PC-9 (cell line): ENCODE measurements at regions of chr15 and their contacts with region 1.

Region 1: DNA sequence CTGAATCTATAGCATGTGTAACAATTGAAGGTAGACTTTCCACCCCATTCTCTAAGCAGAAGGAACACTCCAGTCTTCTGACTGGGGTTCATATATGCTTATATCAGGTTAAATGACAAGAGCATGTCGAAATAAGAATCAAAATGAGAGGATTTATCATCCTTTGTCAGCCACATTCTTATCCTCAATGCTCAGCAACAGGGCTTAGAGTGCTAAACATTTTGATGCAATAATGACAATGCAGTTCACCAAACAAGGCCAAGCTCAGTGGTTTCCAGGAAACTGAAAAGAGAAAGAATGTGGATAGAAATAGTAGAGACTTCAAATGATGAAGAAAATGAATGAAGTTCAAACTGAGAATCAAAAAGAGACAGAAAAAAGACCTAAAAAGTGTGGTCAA is 78.0 kb downstream of the FSIP1 start:
- DNase-seq: no peak
- H3K4me3 ChIP-seq: no peak overlapping the region
- H3K27ac ChIP-seq: no peak overlapping the region
- H3K4me1 ChIP-seq: no peaks in the 10 kb centered on the region
- H3K27me3 ChIP-seq: no peaks in the 10 kb centered on the region
- CTCF ChIP-seq: no peak

Region 2: GRCh38 chr15:39624806-39625205 is 79.9 kb before region 1 on chr15:
- CTCF ChIA-PET with region 1: no interaction called
- POLR2A ChIA-PET with region 1: no interaction called
- intact Hi-C with region 1: no loop called
- DNase-seq: peak; percentile 49 to 57
- H3K4me3 ChIP-seq: no peak overlapping the region
- H3K27ac ChIP-seq: peak overlapping the region; percentile 45
- H3K4me1 ChIP-seq: peaks cover 12% of the 10 kb centered on the region
- H3K27me3 ChIP-seq: no peaks in the 10 kb centered on the region
- CTCF ChIP-seq: no peak

Region 3: DNA sequence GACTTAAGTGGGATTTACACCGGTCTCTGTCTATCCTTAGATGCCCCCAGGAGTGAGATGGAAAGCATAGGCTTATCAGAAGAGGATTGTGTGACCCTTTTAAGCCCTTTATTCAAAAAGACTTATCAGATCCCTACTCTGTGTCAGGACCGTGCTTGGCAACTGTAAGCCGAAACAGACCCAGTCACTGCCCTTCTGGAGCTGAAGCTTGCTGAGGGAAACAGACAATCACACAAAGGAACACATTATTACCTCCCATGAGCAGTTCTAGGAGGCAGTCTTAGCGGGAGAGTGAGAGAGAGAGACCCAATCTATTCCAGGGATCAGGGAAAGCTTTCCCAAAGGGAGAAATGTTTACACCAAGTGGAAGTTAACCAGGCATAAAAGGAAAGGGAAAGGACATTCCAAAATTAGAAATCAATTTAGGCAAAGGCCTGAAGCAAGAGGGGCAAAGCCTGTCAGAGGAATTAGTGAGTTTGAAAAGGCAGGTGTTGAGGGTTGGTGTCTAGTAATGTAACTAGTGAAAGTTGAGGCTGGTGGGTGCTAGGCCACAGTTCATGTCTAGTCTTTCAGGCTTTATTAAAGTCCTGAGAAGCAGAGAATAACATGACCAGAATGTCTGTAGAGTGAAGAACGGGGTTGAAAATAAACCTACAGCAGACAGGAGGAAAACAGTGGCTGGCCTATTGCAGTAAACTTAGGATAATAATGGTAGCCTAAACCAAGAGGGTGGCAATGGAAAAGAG is 37.1 kb before region 1 on chr15:
- CTCF ChIA-PET with region 1: no interaction called
- POLR2A ChIA-PET with region 1: no interaction called
- intact Hi-C with region 1: no loop called
- DNase-seq: no peak
- H3K4me3 ChIP-seq: no peak overlapping the region
- H3K27ac ChIP-seq: no peak overlapping the region
- H3K4me1 ChIP-seq: no peaks in the 10 kb centered on the region
- H3K27me3 ChIP-seq: no peaks in the 10 kb centered on the region
- CTCF ChIP-seq: no peak

Region 4: DNA sequence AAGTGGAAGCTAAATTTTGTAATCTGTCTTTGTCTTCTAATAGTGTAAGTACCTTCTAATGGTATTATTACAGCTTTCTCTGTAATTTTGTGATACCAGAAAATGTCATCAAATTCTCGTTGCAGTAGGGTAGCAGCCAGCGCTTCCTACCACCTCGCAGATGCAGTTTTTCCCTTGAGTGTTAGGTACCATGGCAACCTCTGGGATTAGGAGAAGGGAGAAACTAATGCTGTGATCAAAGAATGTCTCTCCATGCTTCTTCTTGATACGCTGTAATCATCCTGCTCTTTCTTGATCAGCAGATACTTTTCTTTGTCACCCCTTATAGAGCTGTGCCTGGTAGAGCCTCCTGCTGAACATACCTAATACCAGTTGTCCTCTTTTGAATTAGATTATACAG is 306.6 kb after region 1 on chr15:
- CTCF ChIA-PET with region 1: no interaction called
- POLR2A ChIA-PET with region 1: interaction called, 11 read pairs
- intact Hi-C with region 1: no loop called
- DNase-seq: no peak
- H3K4me3 ChIP-seq: no peak overlapping the region
- H3K27ac ChIP-seq: no peak overlapping the region
- H3K4me1 ChIP-seq: no peaks in the 10 kb centered on the region
- H3K27me3 ChIP-seq: no peaks in the 10 kb centered on the region
- CTCF ChIP-seq: no peak